ENCODE measurements at regions of chr2 and their contacts with region 1.

Region 1: GRCh38 chr2:173210270-173211196 is 134.9 kb downstream of the MAP3K20 start:
- DNase-seq: peak in 3 of 4 donors; percentile 54 to 87 (median 77)
- ATAC-seq: peak; percentile 95
- H3K4me3 ChIP-seq: no peak overlapping the region
- H3K27ac ChIP-seq: no peak overlapping the region
- H3K4me1 ChIP-seq: peaks cover 0 to 18% of the 10 kb centered on the region in 2 donors
- H3K27me3 ChIP-seq: no peaks in the 10 kb centered on the region
- CTCF ChIP-seq: peak; percentile 78 to 84

Region 2: DNA sequence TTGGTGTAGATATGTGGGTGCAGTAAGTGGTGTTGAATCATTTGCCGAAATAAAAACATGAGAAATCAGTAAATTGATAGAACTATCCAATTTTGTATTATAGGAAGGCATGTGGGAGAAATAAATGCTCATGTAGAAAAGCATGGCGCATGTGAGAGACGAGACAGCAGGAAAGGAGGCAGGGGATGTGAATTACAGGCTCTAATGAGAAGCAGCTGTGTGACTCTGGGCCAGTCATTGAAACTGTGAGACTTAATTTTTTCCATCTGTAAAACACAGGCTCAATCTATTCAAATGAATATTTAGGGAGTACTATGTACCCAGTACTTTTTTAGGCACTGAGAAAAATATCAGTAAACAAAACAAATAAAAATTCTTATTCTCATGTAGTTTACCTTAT is 177.4 kb before region 1 on chr2:
- intact Hi-C with region 1: loop called in 1 of 2 experiments (anchors 5 kb)
- DNase-seq: no peak
- ATAC-seq: no peak
- H3K4me3 ChIP-seq: no peak overlapping the region
- H3K27ac ChIP-seq: no peak overlapping the region
- H3K4me1 ChIP-seq: no peaks in the 10 kb centered on the region
- H3K27me3 ChIP-seq: no peaks in the 10 kb centered on the region
- CTCF ChIP-seq: no peak

Region 3: GRCh38 chr2:173496746-173497145 is 286.2 kb after region 1 on chr2:
- intact Hi-C with region 1: no loop called
- DNase-seq: no peak
- ATAC-seq: no peak
- H3K4me3 ChIP-seq: no peak overlapping the region
- H3K27ac ChIP-seq: no peak overlapping the region
- H3K4me1 ChIP-seq: no peaks in the 10 kb centered on the region
- H3K27me3 ChIP-seq: no peaks in the 10 kb centered on the region
- CTCF ChIP-seq: no peak

Region 4: GRCh38 chr2:173898178-173898668 is 687.7 kb after region 1 on chr2:
- intact Hi-C with region 1: no loop called
- DNase-seq: peak in 2 of 4 donors; percentile 14 to 53
- ATAC-seq: no peak
- H3K4me3 ChIP-seq: no peak overlapping the region
- H3K27ac ChIP-seq: peak overlapping the region in 1 of 2 donors; percentile 0
- H3K4me1 ChIP-seq: peaks cover 0 to 11% of the 10 kb centered on the region in 2 donors
- H3K27me3 ChIP-seq: no peaks in the 10 kb centered on the region
- CTCF ChIP-seq: no peak

Measured in left lung (tissue), 14 donors.